Left cardiac atrium (tissue), 4 donors: ENCODE measurements at regions of chr9 and their contacts with region 1.

Region 1: GRCh38 chr9:117487555-117488175 is 72.8 kb upstream of the ASTN2 start:
- DNase-seq: peak; percentile 69
- ATAC-seq: peak; percentile 89 to 96

Region 2: DNA sequence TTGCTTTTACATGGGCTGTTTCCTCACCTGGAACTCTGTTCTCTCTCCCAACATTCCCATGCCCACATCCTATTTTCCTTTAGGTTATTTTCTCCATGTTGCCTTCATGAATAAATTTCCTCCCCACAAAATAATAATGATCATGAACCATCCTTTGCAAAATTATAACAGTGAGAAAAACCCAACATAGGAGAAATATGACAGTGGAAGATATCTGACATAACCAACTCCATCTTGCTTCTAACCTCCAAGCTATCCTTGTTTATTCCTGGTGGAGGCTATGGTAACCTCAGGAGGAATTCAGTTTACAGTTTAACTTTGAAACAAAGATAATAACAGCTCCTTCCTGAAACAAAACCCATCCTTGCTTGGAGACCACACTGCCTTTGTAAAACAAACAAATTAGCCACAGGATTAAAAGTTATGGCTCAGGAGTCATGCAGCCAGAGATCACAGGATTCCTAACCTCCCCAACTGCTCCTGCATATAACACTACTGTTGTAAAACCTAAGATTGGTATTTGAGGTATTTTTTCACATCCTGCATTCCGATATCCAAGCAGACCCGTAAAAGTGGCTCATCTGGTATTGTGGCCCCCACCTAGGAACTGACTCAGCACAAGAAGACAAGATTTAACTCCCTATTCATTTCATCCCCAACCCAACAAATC is 588.2 kb before region 1 on chr9:
- intact Hi-C with region 1: no loop called
- DNase-seq: no peak
- ATAC-seq: no peak

Region 3: DNA sequence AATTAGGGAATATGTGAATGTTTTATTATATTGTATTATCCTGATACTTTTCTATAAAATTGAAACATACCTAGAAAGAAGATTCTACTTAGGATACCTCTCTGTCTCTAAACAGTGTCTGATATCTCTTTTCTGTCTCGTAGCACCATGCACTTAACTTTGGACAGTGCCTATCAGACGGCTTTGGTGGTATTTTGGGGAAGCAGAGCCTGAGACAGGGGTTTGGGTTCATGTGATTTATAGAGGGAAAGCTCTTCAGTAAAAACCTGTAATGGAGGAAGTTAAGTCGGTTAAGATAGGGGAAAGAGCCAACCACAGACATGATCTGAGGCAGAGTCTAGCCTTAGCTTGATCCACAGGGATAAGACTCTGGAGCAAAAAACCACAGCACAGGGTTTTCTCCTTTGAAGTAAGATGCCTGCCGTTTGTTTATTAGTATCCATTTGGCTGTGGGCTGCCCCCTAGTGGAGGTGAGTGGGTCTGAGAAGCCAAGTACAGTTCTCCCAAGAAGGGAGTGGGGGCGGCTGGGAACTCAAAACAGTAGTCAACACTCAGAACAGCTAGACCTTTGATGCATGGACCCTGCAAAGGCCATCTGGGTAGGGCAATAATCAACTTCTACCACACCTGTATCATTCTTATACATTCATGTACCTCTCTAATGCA is 68.4 kb after region 1 on chr9:
- intact Hi-C with region 1: loop called in 1 of 2 experiments (anchors 1 kb)
- DNase-seq: peak; percentile 47
- ATAC-seq: no peak